Sciatic nerve (tissue), 2 donors: ENCODE measurements at regions of chr6 and their contacts with region 1.

Region 1: GRCh38 chr6:47810885-47811284 is 29.1 kb downstream of the OPN5 start:
- DNase-seq: no peak
- ATAC-seq: no peak

Region 2: GRCh38 chr6:47852727-47853126 is 41.8 kb after region 1 on chr6:
- intact Hi-C with region 1: loop called (anchors 1 kb)
- DNase-seq: no peak
- ATAC-seq: no peak